ENCODE measurements at regions of chr19 and their contacts with region 1.

Region 1: GRCh38 chr19:49546825-49547565 is 19.2 kb downstream of the RCN3 start:
- DNase-seq: peak; percentile 88 to 89
- H3K4me3 ChIP-seq: no peak overlapping the region
- H3K4me3 Mint-ChIP-seq: peak overlapping the region; percentile 54
- H3K27ac Mint-ChIP-seq: peak overlapping the region; percentile 44
- H3K4me1 ChIP-seq: peaks cover 3% of the 10 kb centered on the region; the same call in 1 of the 2 replicates
- H3K4me1 Mint-ChIP-seq: peaks cover 21% of the 10 kb centered on the region
- H3K27me3 ChIP-seq: no peaks in the 10 kb centered on the region
- H3K27me3 Mint-ChIP-seq: no peaks in the 10 kb centered on the region
- CTCF ChIP-seq: peak; percentile 84 to 86

Region 2: DNA sequence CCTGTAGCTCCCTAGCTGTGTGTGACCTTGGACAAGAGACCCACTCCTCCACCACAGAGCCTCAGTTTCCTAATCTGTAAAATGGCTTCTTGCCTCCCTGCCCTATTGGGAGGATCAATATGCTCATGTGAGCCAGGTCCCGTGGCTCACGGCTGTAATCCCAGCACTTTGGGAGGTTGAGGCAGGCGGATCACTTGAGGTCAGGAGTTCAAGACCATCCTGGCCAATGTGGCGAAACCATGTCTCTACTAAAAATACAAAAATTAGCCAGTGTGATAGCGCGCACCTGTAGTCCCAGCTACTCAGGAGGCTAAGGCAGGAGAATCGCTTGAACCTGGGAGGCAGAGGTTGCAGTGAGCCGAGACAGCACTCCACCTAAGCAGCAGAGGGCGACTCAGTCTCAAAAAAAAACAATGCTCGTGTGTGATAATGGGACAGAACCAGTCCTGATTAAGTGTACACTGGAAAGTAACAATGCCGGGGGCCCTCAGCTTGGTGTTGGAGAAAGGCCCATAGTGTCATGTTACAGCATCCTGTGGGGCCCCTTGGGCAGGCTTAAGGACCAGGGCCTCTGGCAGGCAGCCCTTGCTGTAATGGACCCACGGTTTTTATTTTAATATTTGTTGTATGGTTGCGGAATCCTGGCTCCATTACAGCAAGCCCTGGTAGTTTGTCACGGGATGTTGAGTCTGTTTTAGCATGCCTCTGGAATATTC is 44.0 kb before region 1 on chr19:
- CTCF ChIA-PET with region 1: interaction called, 62 read pairs
- POLR2A ChIA-PET with region 1: interaction called, 6 read pairs
- intact Hi-C with region 1: loop called (anchors 1 kb)
- DNase-seq: peak; percentile 69 to 73
- H3K4me3 ChIP-seq: no peak overlapping the region
- H3K4me3 Mint-ChIP-seq: no peak overlapping the region
- H3K27ac Mint-ChIP-seq: no peak overlapping the region
- H3K4me1 ChIP-seq: peaks cover 5% of the 10 kb centered on the region; the same call in 1 of the 2 replicates
- H3K4me1 Mint-ChIP-seq: peaks cover 7% of the 10 kb centered on the region
- H3K27me3 ChIP-seq: no peaks in the 10 kb centered on the region
- H3K27me3 Mint-ChIP-seq: no peaks in the 10 kb centered on the region
- CTCF ChIP-seq: peak; percentile 65 to 76

Region 3: DNA sequence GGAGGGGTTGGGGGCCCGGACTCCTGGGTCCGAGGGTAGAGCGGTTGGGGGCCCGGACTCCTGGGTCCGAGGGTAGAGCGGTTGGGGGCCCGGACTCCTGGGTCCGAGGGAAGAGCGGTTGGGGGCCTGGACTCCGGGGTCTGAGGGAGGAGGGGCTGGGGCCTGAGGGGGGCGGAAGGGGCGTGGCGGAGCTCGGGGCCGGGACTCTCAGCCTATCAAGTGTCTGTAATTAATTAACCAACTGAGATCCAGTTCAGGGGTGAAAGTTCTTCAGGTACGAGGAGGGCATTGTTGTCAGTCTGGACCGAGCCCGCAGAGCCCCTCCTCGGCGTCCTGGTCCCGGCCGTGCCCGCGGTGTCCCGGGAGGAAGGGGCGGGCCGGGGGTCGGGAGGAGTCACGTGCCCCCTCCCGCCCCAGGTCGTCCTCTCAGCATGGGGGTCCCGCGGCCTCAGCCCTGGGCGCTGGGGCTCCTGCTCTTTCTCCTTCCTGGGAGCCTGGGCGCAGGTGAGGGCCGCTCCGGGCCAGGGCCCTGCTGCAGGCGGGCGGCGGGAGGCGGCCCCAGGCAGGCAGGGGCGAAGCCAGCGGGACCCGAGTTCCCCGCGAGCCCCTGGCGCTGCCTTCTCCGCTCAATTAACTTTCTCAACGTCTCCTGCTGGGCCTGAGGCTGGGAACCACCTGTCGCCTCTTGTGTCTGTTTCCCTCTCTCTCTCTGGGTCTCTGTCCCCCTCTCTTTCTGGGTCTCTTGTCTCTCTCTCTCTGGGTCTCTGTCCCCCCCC is 33.8 kb before region 1 on chr19:
- CTCF ChIA-PET with region 1: interaction called, 62 read pairs
- POLR2A ChIA-PET with region 1: interaction called, 4 read pairs
- intact Hi-C with region 1: no loop called
- DNase-seq: peak; percentile 76 to 80
- H3K4me3 ChIP-seq: peak overlapping the region; percentile 86
- H3K4me3 Mint-ChIP-seq: peak overlapping the region; percentile 100
- H3K27ac Mint-ChIP-seq: peak overlapping the region; percentile 88
- H3K4me1 ChIP-seq: peaks cover 18% of the 10 kb centered on the region
- H3K4me1 Mint-ChIP-seq: peaks cover 24% of the 10 kb centered on the region
- H3K27me3 ChIP-seq: no peaks in the 10 kb centered on the region
- H3K27me3 Mint-ChIP-seq: no peaks in the 10 kb centered on the region
- CTCF ChIP-seq: no peak

Region 4: DNA sequence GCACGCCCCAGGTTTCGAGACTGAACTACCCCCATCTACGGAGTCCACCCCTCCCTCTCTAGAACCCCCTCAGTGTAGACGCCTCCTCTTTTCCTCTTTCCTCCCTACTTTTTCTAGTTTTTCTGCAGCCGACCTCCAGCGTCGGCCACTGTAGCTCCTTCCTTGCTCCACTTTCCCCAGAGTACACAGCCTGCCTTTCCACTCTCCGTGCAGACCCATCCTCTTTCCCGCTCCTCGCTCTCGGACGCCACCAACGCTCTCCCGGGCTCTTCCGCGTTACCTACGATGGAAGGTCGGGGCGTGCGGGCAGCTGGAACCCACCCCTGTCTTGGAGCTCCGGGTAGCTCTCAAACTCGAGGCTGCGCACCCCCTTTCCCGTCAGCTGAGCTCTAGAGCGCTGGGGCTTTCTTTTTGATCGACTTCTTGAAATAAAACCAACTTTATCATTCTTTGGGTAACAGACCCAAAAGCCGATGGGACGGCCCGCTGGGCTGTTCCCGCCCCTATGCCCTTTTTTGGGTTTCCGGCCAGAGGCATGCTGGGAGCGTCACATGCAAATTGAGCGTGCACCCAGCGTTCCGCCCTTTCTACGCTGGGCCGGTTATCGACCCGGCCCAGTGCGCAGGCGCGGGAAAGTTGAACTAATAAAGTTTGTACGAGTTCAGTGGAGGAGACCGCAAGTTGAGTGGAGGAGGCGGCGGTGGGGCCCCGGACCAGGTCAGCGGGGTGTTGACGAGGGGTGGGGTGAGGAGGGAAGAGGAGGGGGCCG is 118.5 kb after region 1 on chr19 and contains the starts of genes BCL2L12 and IRF3:
- CTCF ChIA-PET with region 1: no interaction called
- POLR2A ChIA-PET with region 1: no interaction called
- intact Hi-C with region 1: no loop called
- DNase-seq: peak; percentile 97 to 98
- H3K4me3 ChIP-seq: peak within 1 kb of the TSS; percentile 86
- H3K4me3 Mint-ChIP-seq: peak within 1 kb of the TSS; percentile 93
- H3K27ac Mint-ChIP-seq: peak within 1 kb of the TSS; percentile 89
- H3K4me1 ChIP-seq: peaks cover 13% of the 10 kb centered on the region; the same call in 1 of the 2 replicates
- H3K4me1 Mint-ChIP-seq: peaks cover 18% of the 10 kb centered on the region
- H3K27me3 ChIP-seq: no peaks in the 10 kb centered on the region
- H3K27me3 Mint-ChIP-seq: no peaks in the 10 kb centered on the region
- CTCF ChIP-seq: no peak
- total RNA-seq, gene BCL2L12: 103 and 111 TPM in 2 replicates
- total RNA-seq, gene IRF3: 125 and 131 TPM in 2 replicates